Sigmoid colon (tissue), 7 donors: ENCODE measurements at regions of chr2 and their contacts with region 1.

Region 1: DNA sequence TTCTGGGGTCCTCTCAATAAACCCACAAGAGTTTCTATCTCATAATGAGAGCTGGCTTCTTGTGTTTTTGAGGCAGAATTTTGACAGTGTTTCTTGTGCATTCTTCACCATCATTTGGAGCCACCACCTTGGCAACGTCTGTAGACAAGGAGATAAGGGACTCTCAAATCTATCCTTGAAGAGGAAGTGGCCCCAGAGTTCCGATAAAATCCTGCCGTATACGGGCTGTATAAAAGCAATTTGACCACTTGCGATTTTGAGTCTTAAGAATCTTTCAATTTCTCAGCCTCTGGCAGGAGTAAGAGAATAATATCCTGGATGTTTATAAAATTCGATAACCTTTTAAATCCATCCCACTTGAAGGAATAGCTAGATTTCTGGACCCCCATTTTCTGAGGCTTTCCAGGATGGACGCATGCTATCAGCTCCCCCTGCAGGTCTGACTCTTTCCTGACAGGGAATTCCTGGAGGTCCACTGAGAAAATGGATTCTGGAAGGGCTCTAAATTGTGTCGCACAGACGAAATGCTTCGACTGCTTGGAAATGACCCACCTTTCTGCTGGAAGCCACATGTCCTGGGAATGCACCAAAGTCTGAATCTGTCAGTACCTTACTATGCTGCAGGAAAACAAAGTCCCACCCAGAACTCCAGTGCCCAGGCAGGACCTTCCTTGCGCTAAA is 54.1 kb downstream of the E2F6 start:
- DNase-seq: peak; percentile 72
- H3K4me3 ChIP-seq: peak overlapping the region; percentile 2 to 43 (median 38)
- H3K27ac ChIP-seq: peak overlapping the region in 2 of 4 donors; percentile 2 to 3
- H3K4me1 ChIP-seq: peaks cover 0 to 22% (median 14%) of the 10 kb centered on the region in 4 donors
- H3K27me3 ChIP-seq: no peaks in the 10 kb centered on the region
- CTCF ChIP-seq: peak; percentile 72 to 87 (median 76)
- EP300 ChIP-seq: no peak
- POLR2A ChIP-seq: no peak

Region 2: DNA sequence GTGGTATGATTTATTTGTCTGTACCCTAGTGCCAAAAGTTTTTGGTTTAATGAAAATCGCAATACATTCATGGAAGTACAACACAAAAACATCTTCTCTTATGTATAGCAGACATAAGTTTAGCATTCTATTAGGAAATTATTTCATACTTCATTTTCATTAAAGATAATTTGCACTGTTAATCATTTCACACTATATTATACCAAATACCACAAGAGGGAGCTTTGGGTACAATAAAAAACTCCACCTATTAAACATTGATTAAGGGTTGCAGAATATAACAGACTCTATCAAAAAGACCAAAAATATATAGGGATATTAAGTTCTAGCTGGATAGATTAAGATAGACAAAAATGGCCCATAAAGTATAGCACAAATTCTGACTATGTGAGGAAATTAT is 177.6 kb before region 1 on chr2:
- intact Hi-C with region 1: loop called (anchors 1 kb)
- DNase-seq: no peak
- H3K4me3 ChIP-seq: no peak overlapping the region
- H3K27ac ChIP-seq: no peak overlapping the region
- H3K4me1 ChIP-seq: peaks cover 0 to 16% (median 8%) of the 10 kb centered on the region in 4 donors
- H3K27me3 ChIP-seq: no peaks in the 10 kb centered on the region
- CTCF ChIP-seq: peak; percentile 47 to 60 (median 52)
- EP300 ChIP-seq: no peak
- POLR2A ChIP-seq: no peak

Region 3: GRCh38 chr2:11377928-11378545 is 33.9 kb before region 1 on chr2:
- intact Hi-C with region 1: loop called (anchors 1 kb)
- DNase-seq: peak; percentile 85
- H3K4me3 ChIP-seq: peak overlapping the region in 2 of 4 donors; percentile 17 to 18
- H3K27ac ChIP-seq: peak overlapping the region; percentile 63 to 92 (median 90)
- H3K4me1 ChIP-seq: peaks cover 2 to 60% (median 47%) of the 10 kb centered on the region in 4 donors
- H3K27me3 ChIP-seq: no peaks in the 10 kb centered on the region
- CTCF ChIP-seq: no peak
- EP300 ChIP-seq: peak; percentile 62 to 89 (median 81)
- POLR2A ChIP-seq: no peak